ENCODE measurements at regions of chr6 and their contacts with region 1.

Region 1: GRCh38 chr6:141988954-141989705 is 143.6 kb upstream of the GJE1 start:
- DNase-seq: no peak
- H3K4me3 ChIP-seq: no peak overlapping the region
- CTCF ChIP-seq: peak; percentile 79

Region 2: GRCh38 chr6:141977821-141978220 is 11.3 kb before region 1 on chr6:
- CTCF ChIA-PET with region 1: interaction called, 10 read pairs
- POLR2A ChIA-PET with region 1: no interaction called
- DNase-seq: no peak
- H3K4me3 ChIP-seq: no peak overlapping the region
- CTCF ChIP-seq: no peak

Region 3: DNA sequence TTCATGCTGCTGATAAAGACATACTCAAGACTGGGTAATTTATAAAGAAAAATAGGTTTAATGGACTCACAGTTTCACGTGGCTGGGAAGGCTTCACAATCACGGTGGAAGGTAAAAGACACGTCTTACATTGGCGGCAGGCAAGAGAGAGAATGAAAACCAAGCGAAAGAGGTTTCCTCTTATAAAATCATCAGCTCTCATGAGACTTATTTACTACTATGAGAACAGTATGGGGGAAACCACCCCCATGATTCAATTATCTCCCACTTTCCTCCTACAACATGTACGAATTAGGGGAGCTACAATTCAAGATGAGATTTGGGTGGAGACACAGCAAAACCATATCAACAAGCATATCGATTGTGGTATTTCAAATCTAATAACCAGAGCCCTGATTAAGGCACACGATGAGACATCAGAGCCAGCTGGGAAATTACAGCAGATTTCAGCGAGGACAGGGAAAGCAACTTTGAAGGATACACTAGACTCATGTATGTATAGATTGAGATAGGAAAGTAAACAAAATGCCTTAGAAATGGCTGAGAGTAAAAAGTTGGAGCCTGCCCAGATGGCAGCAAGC is 13.8 kb after region 1 on chr6:
- CTCF ChIA-PET with region 1: interaction called, 25 read pairs
- POLR2A ChIA-PET with region 1: no interaction called
- DNase-seq: no peak
- H3K4me3 ChIP-seq: no peak overlapping the region
- CTCF ChIP-seq: no peak

Region 4: DNA sequence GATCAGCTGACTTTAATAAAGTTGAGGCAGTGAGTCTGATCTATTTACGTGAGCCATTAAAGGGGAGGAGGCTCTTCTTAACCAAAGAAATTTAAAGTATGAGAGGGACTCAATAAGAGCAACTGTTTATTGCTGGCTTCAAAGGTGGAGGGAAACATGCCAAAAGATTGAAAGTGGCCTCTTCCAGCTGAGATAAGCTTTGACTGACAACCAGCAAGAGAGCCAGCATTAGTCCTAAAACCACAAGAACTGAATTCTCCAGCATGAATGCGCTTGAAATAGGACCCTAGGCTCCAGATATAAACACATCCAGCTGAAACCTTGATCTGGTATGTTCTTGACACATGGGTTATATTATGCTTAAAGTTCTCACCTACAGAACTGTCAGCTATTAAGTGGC is 20.5 kb after region 1 on chr6:
- CTCF ChIA-PET with region 1: interaction called, 11 read pairs
- POLR2A ChIA-PET with region 1: interaction called, 3 read pairs
- DNase-seq: no peak
- H3K4me3 ChIP-seq: no peak overlapping the region
- CTCF ChIP-seq: no peak

Region 5: GRCh38 chr6:142045380-142046278 is 56.5 kb after region 1 on chr6:
- CTCF ChIA-PET with region 1: interaction called, 81 read pairs
- POLR2A ChIA-PET with region 1: no interaction called
- DNase-seq: no peak
- H3K4me3 ChIP-seq: no peak overlapping the region
- CTCF ChIP-seq: peak; percentile 23

Region 6: GRCh38 chr6:142112451-142113061 is 123.4 kb after region 1 on chr6:
- CTCF ChIA-PET with region 1: interaction called, 99 read pairs
- POLR2A ChIA-PET with region 1: interaction called, 3 read pairs
- DNase-seq: peak; percentile 16
- H3K4me3 ChIP-seq: no peak overlapping the region
- CTCF ChIP-seq: peak; percentile 66